ENCODE measurements at regions of chr9 and their contacts with region 1.

Region 1: DNA sequence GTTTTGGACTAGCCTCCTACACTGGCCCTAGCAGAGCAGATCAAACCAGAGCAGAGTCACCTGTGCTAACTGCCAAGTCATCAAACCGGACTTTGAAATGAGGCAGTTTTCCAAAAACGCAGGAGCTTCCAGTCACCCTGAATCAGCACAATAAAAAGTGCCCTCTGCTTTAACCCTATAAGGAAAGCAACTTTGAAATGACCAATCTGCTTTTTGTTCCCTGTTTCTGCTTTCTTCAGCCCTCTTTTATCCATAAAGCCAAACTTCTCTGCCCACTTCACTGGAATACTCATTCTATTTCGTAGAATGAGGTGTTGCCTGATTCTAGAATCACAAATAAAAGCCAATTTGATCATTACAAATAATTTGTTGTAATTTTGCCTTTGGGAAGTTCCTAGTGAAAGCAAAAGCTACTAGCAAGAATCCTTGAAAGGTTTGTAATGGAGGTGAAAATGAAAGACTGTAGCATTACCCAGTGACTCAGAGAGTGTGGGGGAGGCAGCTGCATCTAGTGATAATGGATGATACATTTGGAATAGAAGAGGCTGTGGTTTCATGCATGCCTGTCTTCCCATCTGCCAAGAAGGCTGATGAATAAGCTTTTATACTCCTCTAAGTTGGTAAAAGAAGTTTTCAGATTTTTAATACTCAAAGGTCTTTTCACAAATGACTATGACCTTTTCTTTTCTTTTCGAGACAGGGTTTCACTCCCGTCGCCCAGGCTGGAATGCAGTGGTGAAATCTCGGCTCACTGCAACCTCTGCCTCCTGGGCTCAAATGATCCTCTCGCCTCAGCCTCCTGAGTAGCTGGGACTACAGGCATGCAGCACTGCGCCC is 14.9 kb downstream of the SPAAR start:
- DNase-seq: peak; percentile 58 to 86 (median 68)
- ATAC-seq: peak; percentile 93
- H3K4me3 ChIP-seq: peak overlapping the region; percentile 13; the same call in 1 of the 2 replicates
- H3K27ac ChIP-seq: peak overlapping the region; percentile 99
- H3K4me1 ChIP-seq: peaks cover 18 to 42% of the 10 kb centered on the region in 2 experiments
- H3K27me3 ChIP-seq: no peaks in the 10 kb centered on the region
- CTCF ChIP-seq: no peak
- EP300 ChIP-seq: peak; percentile 86
- POLR2A ChIP-seq: peak; percentile 34
- RAD21 ChIP-seq: no peak

Region 2: DNA sequence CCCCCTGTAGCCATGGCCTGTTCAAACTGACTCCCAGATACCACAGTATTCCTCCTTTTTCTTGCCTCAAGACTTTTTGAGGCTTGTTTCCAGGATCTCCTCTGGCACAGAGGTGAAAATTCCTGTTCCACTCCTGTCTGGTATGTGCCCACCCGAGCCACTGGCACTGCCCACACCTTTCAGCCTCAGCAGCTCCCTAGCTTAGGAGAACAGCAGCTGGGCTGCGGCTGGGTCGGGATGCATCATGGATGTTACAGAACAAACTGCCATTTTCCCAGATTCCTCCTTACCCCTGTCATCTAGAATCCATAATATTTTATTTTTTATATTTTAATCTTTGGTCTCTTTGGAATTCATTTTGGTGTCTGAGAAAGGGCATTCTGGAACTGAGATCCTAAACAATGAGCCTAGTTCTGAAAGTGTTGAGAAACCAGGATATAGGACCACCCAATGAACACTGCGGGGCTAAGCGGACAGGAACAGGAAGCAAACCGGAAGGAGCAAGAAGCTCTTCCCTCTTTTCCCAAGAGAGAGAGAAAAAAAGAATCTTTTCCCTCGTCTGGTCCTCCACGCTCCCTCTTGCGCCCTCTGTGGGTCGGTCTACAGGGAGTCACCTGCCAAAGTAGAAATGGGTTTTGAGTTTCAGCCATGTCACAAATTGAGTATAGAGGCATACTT is 21.3 kb after region 1 on chr9:
- CTCF ChIA-PET with region 1: no interaction called
- POLR2A ChIA-PET with region 1: interaction called, 16 read pairs
- in situ Hi-C with region 1: no loop called
- intact Hi-C with region 1: no loop called
- DNase-seq: peak; percentile 76 to 86 (median 78)
- ATAC-seq: peak; percentile 87
- H3K4me3 ChIP-seq: no peak overlapping the region
- H3K27ac ChIP-seq: no peak overlapping the region; the same call in 2 of the 3 replicates
- H3K4me1 ChIP-seq: peaks cover 2 to 3% of the 10 kb centered on the region in 2 experiments; a peak in 3 of 5 replicates
- H3K27me3 ChIP-seq: no peaks in the 10 kb centered on the region
- CTCF ChIP-seq: peak; percentile 76 to 85 (median 81)
- EP300 ChIP-seq: no peak
- POLR2A ChIP-seq: no peak
- RAD21 ChIP-seq: peak; percentile 76 to 79